Sciatic nerve (tissue), 2 donors: ENCODE measurements at regions of chr19 and their contacts with region 1.

Region 1: GRCh38 chr19:12163826-12164225 is 930 bp downstream of the ZNF136 start:
- DNase-seq: no peak
- ATAC-seq: no peak

Region 2: GRCh38 chr19:10695401-10696398 is 1468.1 kb before region 1 on chr19:
- intact Hi-C with region 1: no loop called
- DNase-seq: peak; percentile 94
- ATAC-seq: peak; percentile 99

Region 3: GRCh38 chr19:12141405-12141736 is 22.5 kb before region 1 on chr19:
- intact Hi-C with region 1: loop called (anchors 1 kb)
- DNase-seq: no peak
- ATAC-seq: no peak